ENCODE measurements at regions of chr10 and their contacts with region 1.

Region 1: GRCh38 chr10:59625721-59626522 is 83.7 kb downstream of the SLC16A9 start:
- DNase-seq: peak; percentile 29 to 53
- H3K4me3 ChIP-seq: no peak overlapping the region
- H3K27ac ChIP-seq: no peak overlapping the region; the same call in 1 of the 2 replicates
- H3K4me1 ChIP-seq: peaks cover 3 to 4% (median 4%) of the 10 kb centered on the region in 4 experiments; a peak in 4 of 7 replicates
- H3K27me3 ChIP-seq: no peaks in the 10 kb centered on the region
- CTCF ChIP-seq: peak; percentile 2 to 95 (median 90)
- EP300 ChIP-seq: no peak
- POLR2A ChIP-seq: no peak
- RAD21 ChIP-seq: peak; percentile 98 to 99

Region 2: DNA sequence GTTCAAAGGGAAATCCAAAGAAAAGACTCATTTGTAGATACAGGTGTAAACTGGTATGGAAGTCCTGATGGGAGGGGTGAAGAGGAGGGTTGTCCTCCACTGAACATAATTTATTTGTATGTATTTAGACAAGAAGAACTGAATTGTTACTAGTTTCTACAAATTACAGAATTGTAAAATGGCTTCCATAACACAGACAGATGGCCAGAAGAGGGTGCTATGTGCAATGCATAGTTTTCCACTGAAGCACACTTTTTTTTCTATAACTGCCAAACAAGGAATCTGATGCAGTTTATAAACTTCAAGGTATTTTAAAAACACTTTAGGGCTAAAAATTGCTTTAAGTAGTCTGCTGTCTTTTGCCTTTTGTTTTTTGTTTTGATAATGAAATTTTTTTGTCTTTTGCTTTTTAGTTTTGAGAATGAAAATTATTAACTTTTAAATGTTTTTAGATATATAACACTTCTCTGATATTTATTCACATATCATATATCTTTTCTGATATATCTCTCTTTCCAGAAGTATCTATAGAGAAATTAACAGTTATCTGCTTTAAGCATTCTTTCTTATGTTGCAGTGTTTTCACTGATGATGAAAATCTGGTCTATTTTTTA is 391.0 kb before region 1 on chr10:
- CTCF ChIA-PET with region 1: interaction called, 20 read pairs
- POLR2A ChIA-PET with region 1: no interaction called
- DNase-seq: no peak
- H3K4me3 ChIP-seq: no peak overlapping the region
- H3K27ac ChIP-seq: no peak overlapping the region
- H3K4me1 ChIP-seq: no peaks in the 10 kb centered on the region
- H3K27me3 ChIP-seq: no peaks in the 10 kb centered on the region
- CTCF ChIP-seq: peak in 2 of 3 experiments; percentile 48 to 59; a peak in 2 of 4 replicates
- EP300 ChIP-seq: no peak
- POLR2A ChIP-seq: no peak
- RAD21 ChIP-seq: peak; percentile 68 to 71

Region 3: DNA sequence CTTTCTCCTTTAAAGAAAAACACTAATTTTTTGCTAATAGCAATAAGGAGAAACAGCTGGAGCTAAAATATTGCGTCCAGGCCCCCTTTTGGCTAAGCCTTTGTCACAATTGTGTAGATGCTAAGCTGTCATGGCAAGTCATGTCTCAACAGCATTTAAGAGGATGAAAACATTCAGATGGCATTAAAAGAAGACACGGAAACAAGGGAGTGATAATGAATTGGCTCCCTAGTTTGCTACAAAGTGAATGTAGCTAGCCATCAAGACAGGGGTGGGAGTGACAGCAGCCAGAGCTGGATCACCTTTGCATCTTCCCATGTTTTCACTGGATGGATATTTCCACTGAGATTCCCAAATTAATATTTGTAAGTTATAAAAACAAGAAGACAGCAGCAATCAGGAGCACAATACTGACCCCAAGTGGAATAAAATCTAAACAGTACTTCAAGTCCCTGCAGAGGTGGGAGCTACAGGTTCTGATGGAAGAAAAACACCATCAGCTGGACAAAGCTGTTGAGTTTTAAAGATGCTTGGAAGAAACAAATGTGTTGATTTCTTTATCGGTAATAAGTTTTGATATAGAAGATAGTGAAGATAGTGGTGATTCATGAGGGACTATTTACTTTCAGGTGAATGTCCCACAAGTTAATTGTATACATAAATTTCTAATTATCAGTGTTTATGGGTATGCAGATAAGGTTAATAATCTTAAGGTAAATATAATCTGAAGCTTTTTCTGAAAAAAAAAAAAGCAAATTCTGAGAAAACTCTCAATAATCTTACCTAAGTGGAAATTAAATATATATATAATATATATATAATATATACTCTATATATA is 45.7 kb before region 1 on chr10:
- CTCF ChIA-PET with region 1: interaction called, 18 read pairs
- POLR2A ChIA-PET with region 1: no interaction called
- DNase-seq: no peak
- H3K4me3 ChIP-seq: no peak overlapping the region
- H3K27ac ChIP-seq: no peak overlapping the region
- H3K4me1 ChIP-seq: no peaks in the 10 kb centered on the region
- H3K27me3 ChIP-seq: no peaks in the 10 kb centered on the region
- CTCF ChIP-seq: peak in 2 of 3 experiments; percentile 33 to 44; a peak in 2 of 4 replicates
- EP300 ChIP-seq: no peak
- POLR2A ChIP-seq: no peak
- RAD21 ChIP-seq: peak; percentile 79 to 80

Region 4: GRCh38 chr10:59606551-59606961 is 19.4 kb before region 1 on chr10:
- CTCF ChIA-PET with region 1: interaction called, 65 read pairs
- POLR2A ChIA-PET with region 1: no interaction called
- DNase-seq: no peak
- H3K4me3 ChIP-seq: no peak overlapping the region
- H3K27ac ChIP-seq: no peak overlapping the region
- H3K4me1 ChIP-seq: no peaks in the 10 kb centered on the region
- H3K27me3 ChIP-seq: no peaks in the 10 kb centered on the region
- CTCF ChIP-seq: no peak
- EP300 ChIP-seq: no peak
- POLR2A ChIP-seq: no peak
- RAD21 ChIP-seq: no peak

Region 5: DNA sequence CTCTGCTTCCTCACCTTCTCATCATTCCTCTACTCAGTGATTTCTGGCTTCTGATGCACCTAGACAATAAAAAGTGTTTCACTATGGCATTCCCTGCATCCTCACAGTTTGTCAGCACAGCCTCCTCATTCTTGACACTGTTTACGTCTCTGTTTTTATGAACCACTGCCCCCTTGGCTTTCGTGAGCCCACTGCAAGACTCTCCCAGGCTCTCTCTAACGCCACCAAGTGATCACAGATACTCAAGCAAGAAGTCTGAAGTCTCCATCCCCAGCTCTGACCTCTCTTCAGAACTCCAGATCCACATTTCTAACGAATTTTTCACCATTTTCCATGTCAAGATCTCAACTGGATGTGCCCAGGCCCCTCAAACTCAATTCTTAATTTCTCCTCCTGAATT is 74.8 kb after region 1 on chr10:
- CTCF ChIA-PET with region 1: interaction called, 77 read pairs
- POLR2A ChIA-PET with region 1: no interaction called
- DNase-seq: no peak
- H3K4me3 ChIP-seq: no peak overlapping the region
- H3K27ac ChIP-seq: no peak overlapping the region
- H3K4me1 ChIP-seq: peaks cover 0 to 3% (median under 1%) of the 10 kb centered on the region in 4 experiments; a peak in 2 of 7 replicates
- H3K27me3 ChIP-seq: no peaks in the 10 kb centered on the region
- CTCF ChIP-seq: peak; percentile 53 to 97 (median 80)
- EP300 ChIP-seq: no peak
- POLR2A ChIP-seq: no peak
- RAD21 ChIP-seq: peak; percentile 54 to 62

Region 6: DNA sequence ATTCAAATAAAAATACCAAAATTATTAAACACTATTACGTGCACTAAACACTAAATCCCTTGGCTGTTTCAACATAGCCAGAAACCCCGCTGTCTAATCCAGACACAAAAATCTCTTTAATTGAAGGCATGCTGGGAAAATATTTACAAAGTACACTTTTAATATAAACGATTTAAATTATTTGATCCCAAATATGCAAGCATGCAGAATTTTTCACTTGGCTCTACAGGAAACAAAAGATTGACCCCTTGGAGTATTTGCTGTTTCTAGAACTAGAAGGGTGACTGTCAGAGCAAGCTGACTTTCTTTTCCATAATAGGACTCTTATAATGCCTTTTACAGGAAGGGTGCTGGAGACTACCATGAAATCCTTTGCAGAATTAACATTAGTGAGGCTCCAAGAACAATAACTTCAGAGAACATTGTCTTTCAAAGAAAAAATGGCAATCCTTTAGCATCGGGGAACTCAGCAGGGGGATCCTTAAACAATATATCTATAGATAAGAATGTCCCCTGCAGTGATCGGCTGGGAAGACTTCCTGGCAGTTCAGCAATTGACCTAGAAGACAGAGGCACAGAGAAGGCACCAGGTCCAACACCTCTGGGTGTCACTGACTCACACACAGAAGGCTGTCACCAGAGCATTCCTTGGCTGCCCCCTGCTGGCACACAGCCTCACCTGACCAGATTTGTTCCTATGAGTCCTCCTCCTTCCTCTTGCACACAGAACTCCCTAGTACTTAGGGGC is 183.1 kb after region 1 on chr10:
- CTCF ChIA-PET with region 1: interaction called, 40 read pairs
- POLR2A ChIA-PET with region 1: no interaction called
- DNase-seq: peak; percentile 43 to 72
- H3K4me3 ChIP-seq: no peak overlapping the region
- H3K27ac ChIP-seq: no peak overlapping the region
- H3K4me1 ChIP-seq: peaks cover 0 to 10% (median 2%) of the 10 kb centered on the region in 4 experiments; a peak in 5 of 7 replicates
- H3K27me3 ChIP-seq: no peaks in the 10 kb centered on the region; a peak in 1 of 7 replicates
- CTCF ChIP-seq: peak; percentile 58 to 87 (median 84)
- EP300 ChIP-seq: no peak
- POLR2A ChIP-seq: no peak
- RAD21 ChIP-seq: peak; percentile 64 to 71

Region 7: DNA sequence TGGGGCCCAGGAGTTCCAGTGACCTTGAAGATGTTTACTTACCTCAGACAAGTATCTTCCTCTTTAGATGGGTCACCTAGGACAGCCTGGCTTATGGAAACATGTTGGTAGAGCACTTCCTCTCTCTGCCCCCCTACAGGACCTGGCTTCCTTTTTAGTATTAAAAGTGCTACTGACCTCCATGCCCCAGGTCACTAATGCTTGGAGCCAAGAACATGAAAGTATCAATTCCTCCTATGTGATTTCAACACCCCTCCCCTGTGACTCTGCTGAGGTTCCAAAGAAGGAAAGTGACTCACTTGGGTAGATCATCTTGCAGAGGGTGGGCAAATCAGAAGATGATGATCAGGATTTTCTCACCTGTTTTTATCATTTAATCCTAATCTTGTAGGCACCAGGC is 405.7 kb after region 1 on chr10:
- CTCF ChIA-PET with region 1: interaction called, 11 read pairs
- POLR2A ChIA-PET with region 1: no interaction called
- DNase-seq: no peak
- H3K4me3 ChIP-seq: no peak overlapping the region
- H3K27ac ChIP-seq: no peak overlapping the region
- H3K4me1 ChIP-seq: peaks cover 0 to 4% (median 1%) of the 10 kb centered on the region in 4 experiments; a peak in 3 of 7 replicates
- H3K27me3 ChIP-seq: no peaks in the 10 kb centered on the region
- CTCF ChIP-seq: no peak
- EP300 ChIP-seq: no peak
- POLR2A ChIP-seq: no peak
- RAD21 ChIP-seq: no peak

Measured in H1 (cell line).